ENCODE measurements at regions of chr14 and their contacts with region 1.

Region 1: DNA sequence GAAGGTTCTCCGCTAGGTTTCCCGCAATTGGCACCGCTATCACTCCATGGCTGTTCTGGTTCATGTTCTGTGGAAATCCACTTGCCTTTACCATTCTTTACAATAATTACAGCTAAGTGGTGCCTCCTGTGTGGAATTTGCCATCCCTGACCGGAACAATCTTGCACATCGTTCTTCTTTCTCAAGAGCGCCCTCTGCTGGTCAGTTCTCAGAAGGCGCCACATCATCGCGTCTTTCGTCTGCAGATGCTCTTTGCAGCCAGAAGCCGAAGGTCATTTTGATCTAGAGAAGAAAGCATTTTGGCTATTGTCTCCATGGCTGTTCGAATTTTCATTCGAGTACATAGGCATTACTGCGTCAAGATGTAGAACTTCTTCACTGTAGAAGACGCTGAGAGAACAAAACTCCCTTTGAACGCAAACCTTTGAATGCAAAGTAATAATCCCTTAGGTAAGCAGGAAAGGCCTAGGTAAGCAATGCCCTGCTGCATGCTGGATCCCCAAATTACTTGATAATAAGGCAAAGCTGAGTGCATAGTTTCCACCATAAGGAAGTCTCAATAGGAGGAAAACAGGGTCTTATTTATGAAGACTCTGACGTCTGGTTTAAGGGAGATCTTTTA is 10.1 kb upstream of the RTRAF start:
- DNase-seq: peak; percentile 63
- H3K4me3 ChIP-seq: no peak overlapping the region; a peak in 1 of 4 replicates
- H3K27ac ChIP-seq: peak overlapping the region in 1 of 2 experiments; percentile 55; a peak in 1 of 4 replicates
- H3K4me1 ChIP-seq: peaks cover 0 to 2% of the 10 kb centered on the region in 2 experiments; a peak in 2 of 4 replicates
- H3K27me3 ChIP-seq: no peaks in the 10 kb centered on the region
- CTCF ChIP-seq: peak; percentile 91
- EP300 ChIP-seq: no peak
- RAD21 ChIP-seq: peak; percentile 93

Region 2: GRCh38 chr14:51834240-51834639 is 145.0 kb before region 1 on chr14:
- CTCF ChIA-PET with region 1: no interaction called
- POLR2A ChIA-PET with region 1: no interaction called
- DNase-seq: no peak
- H3K4me3 ChIP-seq: no peak overlapping the region
- H3K27ac ChIP-seq: no peak overlapping the region
- H3K4me1 ChIP-seq: peaks cover 0 to 4% of the 10 kb centered on the region in 2 experiments; a peak in 1 of 4 replicates
- H3K27me3 ChIP-seq: no peaks in the 10 kb centered on the region
- CTCF ChIP-seq: no peak
- EP300 ChIP-seq: no peak
- RAD21 ChIP-seq: no peak

Region 3: DNA sequence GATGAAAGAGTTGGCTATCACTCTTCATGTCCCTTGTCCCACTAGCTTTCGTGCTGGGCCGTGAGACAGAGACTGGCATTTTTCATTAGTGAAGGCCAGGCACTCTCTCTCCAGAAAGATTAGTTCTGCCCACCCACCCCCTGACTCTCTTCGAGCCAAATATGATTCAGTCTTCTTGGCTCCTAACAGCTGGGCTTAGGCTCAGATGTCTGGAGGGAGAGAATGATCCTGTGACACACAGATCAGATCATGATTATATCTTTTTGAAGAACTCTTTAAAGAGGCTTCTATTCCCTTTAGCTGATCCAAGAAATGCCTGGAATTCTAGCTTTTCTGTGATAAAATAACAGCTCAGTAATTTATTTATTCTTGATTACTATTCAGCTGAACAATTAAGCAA is 124.0 kb before region 1 on chr14:
- CTCF ChIA-PET with region 1: interaction called, 35 read pairs
- POLR2A ChIA-PET with region 1: interaction called, 9 read pairs
- DNase-seq: no peak
- H3K4me3 ChIP-seq: no peak overlapping the region
- H3K27ac ChIP-seq: peak overlapping the region; percentile 54 to 57; a peak in 3 of 4 replicates
- H3K4me1 ChIP-seq: peaks cover 15% of the 10 kb centered on the region in 2 experiments; a peak in 3 of 4 replicates
- H3K27me3 ChIP-seq: no peaks in the 10 kb centered on the region
- CTCF ChIP-seq: no peak
- EP300 ChIP-seq: peak in 1 of 2 experiments; percentile 40; a peak in 1 of 4 replicates
- RAD21 ChIP-seq: no peak

Region 4: DNA sequence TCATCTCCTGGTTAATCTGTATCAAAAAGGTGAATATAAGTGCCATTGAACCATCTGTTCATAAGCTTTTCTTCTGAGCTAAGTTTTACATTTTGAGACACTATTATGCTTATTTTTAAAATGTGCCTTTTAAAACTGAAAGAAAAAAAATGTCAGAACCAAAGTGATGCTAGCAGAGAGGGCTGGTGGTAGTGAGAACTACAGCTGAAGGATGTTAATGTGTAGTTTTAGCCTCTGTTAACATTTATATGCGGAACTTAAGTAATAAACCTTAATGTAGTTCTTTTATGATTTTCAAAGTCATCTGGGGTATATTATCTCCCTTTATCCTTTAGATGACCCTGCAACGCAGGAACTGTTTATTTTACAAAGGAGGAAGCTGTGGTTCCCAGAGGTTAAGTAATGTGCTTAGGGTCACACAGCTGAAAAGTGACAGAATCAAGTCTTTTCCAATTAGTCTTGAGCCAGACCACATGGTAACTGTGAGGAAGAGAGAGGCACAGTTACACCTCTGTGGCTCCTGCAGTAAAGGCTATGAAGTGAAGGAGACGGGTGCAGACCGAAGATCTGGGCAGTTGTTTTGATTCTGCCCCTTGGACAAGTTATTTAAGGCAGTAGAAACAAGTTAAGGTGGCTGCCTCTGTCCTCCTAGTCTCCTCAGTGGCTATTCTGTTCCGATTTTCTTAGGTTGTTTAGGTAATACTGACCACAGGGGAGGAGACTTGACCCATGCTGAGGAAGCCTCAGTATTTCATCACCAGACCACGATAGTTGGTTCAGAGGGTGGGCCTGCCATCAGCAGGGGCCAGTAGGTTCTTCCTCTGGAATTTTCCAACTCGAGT is 94.9 kb before region 1 on chr14:
- CTCF ChIA-PET with region 1: interaction called, 10 read pairs
- POLR2A ChIA-PET with region 1: no interaction called
- DNase-seq: peak; percentile 37
- H3K4me3 ChIP-seq: 0 out of 4 replicates have a peak overlapping the region, but pooled peaks of 1 of the 2 experiments have one; percentile 9
- H3K27ac ChIP-seq: peak overlapping the region; percentile 34 to 86
- H3K4me1 ChIP-seq: peaks cover 0 to 23% of the 10 kb centered on the region in 2 experiments; a peak in 2 of 4 replicates
- H3K27me3 ChIP-seq: no peaks in the 10 kb centered on the region
- CTCF ChIP-seq: no peak
- EP300 ChIP-seq: peak; percentile 31 to 95; a peak in 3 of 4 replicates
- RAD21 ChIP-seq: no peak

Region 5: DNA sequence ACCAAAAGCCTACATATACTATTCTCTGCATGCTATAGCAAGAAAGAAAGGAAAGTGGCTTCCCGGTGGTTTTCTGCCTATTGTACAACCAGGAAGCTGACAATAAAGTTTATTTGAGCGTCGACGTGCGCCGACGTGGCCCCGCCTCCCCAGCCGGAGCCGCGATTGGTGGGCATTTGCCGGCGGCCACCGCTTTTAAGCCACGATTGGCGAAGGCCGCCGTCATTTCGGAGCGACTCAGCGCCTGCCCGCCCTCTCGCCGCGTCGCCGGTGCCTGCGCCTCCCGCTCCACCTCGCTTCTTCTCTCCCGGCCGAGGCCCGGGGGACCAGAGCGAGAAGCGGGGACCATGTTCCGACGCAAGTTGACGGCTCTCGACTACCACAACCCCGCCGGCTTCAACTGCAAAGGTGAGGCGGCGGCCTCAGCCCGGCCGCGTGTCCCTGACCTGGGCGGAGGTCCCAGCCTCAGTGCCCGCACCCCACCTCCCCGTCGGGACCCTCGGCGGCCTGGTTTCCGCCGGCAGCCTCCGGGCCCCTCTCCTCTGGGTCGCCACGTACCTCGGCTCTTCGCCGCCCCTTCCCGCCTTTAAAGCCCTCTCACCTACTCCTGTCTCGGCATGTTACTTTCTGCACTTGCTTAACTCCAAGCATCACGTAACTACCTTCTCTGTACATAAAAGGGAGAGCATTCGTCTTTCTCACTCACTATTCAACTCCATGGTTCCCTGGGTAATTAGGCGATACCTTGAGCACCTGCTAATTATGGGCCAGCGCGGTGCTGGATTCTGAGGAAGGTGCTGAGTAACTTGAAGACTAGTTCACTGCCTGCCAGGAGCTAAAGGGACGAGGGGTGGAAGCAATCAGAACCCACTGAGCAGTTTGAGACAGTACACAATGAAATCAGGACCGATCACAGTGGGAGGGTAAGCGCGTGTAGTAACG is 10.4 kb after region 1 on chr14 and contains the start of gene RTRAF:
- CTCF ChIA-PET with region 1: interaction called, 12 read pairs
- POLR2A ChIA-PET with region 1: interaction called, 3 read pairs
- DNase-seq: peak; percentile 94
- H3K4me3 ChIP-seq: peak within 1 kb of the TSS; percentile 97 to 99
- H3K27ac ChIP-seq: peak within 1 kb of the TSS; percentile 69 to 88
- H3K4me1 ChIP-seq: peaks cover 6 to 8% of the 10 kb centered on the region in 2 experiments; a peak in 3 of 4 replicates
- H3K27me3 ChIP-seq: no peaks in the 10 kb centered on the region
- CTCF ChIP-seq: no peak
- EP300 ChIP-seq: no peak
- RAD21 ChIP-seq: no peak
- polyA plus RNA-seq, gene RTRAF: 42.5 and 43.6 TPM in 2 replicates

Region 6: DNA sequence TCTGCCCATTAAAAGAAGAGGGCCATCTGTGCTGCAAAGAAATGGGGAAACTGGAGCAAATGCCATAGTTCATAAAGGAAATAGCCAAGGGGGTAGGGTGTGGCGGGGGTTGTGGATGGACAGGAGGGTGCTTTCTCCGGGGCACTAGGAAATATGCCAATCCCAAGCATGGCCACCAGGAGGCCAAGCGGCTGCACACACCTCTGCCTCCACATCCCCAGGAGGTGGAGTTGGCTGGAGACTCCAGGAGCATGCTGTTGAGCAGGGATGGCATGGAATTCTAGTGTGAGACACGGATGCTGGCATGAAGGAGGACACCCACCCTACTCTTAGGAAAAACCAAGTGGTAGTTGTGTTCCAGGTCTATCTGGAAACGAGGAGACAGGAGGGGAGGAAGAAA is 64.5 kb after region 1 on chr14:
- CTCF ChIA-PET with region 1: no interaction called
- POLR2A ChIA-PET with region 1: no interaction called
- DNase-seq: peak; percentile 72
- H3K4me3 ChIP-seq: no peak overlapping the region
- H3K27ac ChIP-seq: peak overlapping the region in 1 of 2 experiments; percentile 93; a peak in 1 of 4 replicates
- H3K4me1 ChIP-seq: peaks cover 0 to 20% of the 10 kb centered on the region in 2 experiments; a peak in 3 of 4 replicates
- H3K27me3 ChIP-seq: no peaks in the 10 kb centered on the region
- CTCF ChIP-seq: peak; percentile 59
- EP300 ChIP-seq: no peak
- RAD21 ChIP-seq: peak; percentile 63

Region 7: DNA sequence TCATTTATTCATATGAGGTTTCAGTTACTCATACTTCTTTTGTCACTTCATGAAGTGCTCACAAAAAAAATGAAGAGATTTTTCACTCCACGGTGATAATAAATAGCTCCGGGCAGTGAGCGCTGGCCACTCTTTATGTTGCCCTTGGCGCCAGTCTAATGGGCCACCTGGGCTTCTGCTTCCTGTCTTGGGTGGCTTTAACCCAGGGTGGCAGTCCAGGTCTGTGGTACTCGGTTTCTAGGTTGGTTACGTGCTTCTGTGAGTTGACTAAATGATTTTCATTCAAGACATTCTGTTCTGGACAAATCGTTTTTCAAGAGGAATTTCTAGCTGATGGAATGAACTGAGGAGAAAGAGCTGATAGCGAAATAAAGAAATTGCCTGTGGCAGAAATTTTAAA is 124.2 kb after region 1 on chr14:
- CTCF ChIA-PET with region 1: no interaction called
- POLR2A ChIA-PET with region 1: no interaction called
- DNase-seq: no peak
- H3K4me3 ChIP-seq: no peak overlapping the region
- H3K27ac ChIP-seq: no peak overlapping the region
- H3K4me1 ChIP-seq: no peaks in the 10 kb centered on the region
- H3K27me3 ChIP-seq: no peaks in the 10 kb centered on the region
- CTCF ChIP-seq: no peak
- EP300 ChIP-seq: no peak
- RAD21 ChIP-seq: no peak

Measured in SK-N-SH (cell line).